Natural killer cell (primary cell): ENCODE measurements at regions of chr1 and their contacts with region 1.

Region 1: DNA sequence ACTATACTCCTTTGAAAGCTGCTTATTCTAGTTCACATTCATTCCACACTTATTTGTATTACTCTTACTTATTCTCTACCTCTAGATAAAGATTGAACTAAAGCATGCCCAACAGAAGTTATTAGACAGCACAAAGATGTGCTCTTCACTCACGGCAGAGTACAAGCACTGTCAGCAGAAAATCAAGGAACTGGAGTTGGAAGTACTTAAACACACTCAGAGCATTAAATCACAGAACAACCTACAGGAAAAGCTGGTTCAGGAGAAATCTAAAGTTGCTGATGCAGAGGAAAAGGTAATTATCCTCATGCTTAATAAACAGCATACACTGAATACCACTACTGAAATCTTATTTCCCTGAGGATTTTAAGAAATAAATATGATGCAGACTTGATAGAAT is 81.3 kb upstream of the PPIH start:
- DNase-seq: no peak
- ATAC-seq: no peak
- H3K4me3 ChIP-seq: no peak overlapping the region
- H3K4me3 Mint-ChIP-seq: no peak overlapping the region
- H3K27ac ChIP-seq: no peak overlapping the region
- H3K27ac Mint-ChIP-seq: no peak overlapping the region
- H3K4me1 ChIP-seq: no peaks in the 10 kb centered on the region
- H3K4me1 Mint-ChIP-seq: no peaks in the 10 kb centered on the region
- H3K27me3 ChIP-seq: no peaks in the 10 kb centered on the region
- H3K27me3 Mint-ChIP-seq: no peaks in the 10 kb centered on the region
- CTCF ChIP-seq: no peak

Region 2: GRCh38 chr1:42747125-42747524 is 170.2 kb after region 1 on chr1:
- intact Hi-C with region 1: loop called (anchors 1 kb)
- DNase-seq: peak; percentile 33 to 69
- ATAC-seq: peak in 1 of 3 donors; percentile 54
- H3K4me3 ChIP-seq: no peak overlapping the region
- H3K4me3 Mint-ChIP-seq: no peak overlapping the region
- H3K27ac ChIP-seq: no peak overlapping the region
- H3K27ac Mint-ChIP-seq: no peak overlapping the region
- H3K4me1 ChIP-seq: no peaks in the 10 kb centered on the region
- H3K4me1 Mint-ChIP-seq: peaks cover 0 to 5% of the 10 kb centered on the region in 2 donors
- H3K27me3 ChIP-seq: no peaks in the 10 kb centered on the region
- H3K27me3 Mint-ChIP-seq: no peaks in the 10 kb centered on the region
- CTCF ChIP-seq: peak; percentile 48